ENCODE measurements at regions of chr2 and their contacts with region 1.

Region 1: GRCh38 chr2:11539317-11540152 is 5.7 kb downstream of the GREB1 start:
- DNase-seq: no peak
- ATAC-seq: peak; percentile 18 to 55 (median 40)
- H3K4me3 ChIP-seq: peak overlapping the region; percentile 34
- H3K27ac ChIP-seq: peak overlapping the region; percentile 53
- H3K4me1 ChIP-seq: peaks cover 30% of the 10 kb centered on the region
- H3K27me3 ChIP-seq: no peaks in the 10 kb centered on the region
- CTCF ChIP-seq: no peak

Region 2: DNA sequence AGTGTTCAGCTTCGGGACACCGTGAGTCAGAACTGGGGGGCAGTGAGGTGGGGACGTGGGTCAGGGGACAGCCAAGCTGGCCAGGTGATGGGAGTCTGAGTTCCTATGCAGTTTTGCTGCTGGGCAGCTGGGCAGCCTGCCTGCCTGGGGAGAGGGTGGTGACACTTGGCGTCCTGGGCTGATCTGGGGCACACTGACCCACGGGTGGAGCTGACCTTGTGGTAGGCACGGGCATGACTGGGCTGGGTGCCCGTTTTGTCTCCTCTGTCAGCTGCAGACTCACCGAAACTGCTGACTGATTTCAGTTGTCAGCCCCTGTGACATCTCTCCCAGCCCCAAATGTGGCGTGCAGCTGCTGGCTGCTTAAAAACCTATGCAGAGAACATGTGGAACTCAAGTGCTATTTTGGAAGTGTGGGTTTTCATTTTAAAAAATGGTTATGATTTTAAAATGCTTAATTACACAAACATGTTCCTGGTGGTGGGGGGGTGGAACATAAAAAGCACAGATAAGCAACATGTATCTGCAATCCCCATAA is 40.9 kb before region 1 on chr2:
- intact Hi-C with region 1: loop called in 1 of 2 experiments (anchors 5 kb)
- DNase-seq: peak; percentile 85 to 96
- ATAC-seq: peak; percentile 97 to 99 (median 98)
- H3K4me3 ChIP-seq: peak overlapping the region; percentile 8
- H3K27ac ChIP-seq: peak overlapping the region; percentile 79
- H3K4me1 ChIP-seq: peaks cover 22% of the 10 kb centered on the region
- H3K27me3 ChIP-seq: no peaks in the 10 kb centered on the region
- CTCF ChIP-seq: no peak

Region 3: DNA sequence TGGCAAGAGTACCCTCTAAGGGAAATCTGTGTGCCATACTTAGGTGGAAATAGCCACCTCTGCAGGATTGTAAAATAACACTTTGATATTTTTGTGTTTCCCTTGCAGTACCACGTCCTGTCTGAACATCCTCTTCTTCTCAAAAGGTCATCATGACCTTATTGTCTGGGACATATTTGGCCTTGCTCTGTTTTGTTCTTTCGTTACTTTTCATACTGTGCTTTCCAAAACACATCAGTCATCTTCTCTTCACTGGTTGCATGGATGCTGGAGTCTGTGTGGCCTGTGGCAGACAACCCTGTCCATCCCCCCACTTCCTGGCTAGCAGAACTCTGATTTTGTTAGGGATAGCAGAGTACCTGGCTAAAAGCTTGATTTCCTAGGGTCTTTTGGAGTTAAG is 15.1 kb before region 1 on chr2:
- intact Hi-C with region 1: loop called in 1 of 2 experiments (anchors 1 kb)
- DNase-seq: no peak
- ATAC-seq: peak in 2 of 4 donors; percentile 27 to 50
- H3K4me3 ChIP-seq: no peak overlapping the region
- H3K27ac ChIP-seq: no peak overlapping the region
- H3K4me1 ChIP-seq: peaks cover 3% of the 10 kb centered on the region
- H3K27me3 ChIP-seq: no peaks in the 10 kb centered on the region
- CTCF ChIP-seq: no peak

Region 4: GRCh38 chr2:11573418-11574175 is 34.1 kb after region 1 on chr2:
- intact Hi-C with region 1: loop called in 1 of 2 experiments (anchors 5 kb)
- DNase-seq: peak in 1 of 2 donors; percentile 16
- ATAC-seq: no peak
- H3K4me3 ChIP-seq: no peak overlapping the region
- H3K27ac ChIP-seq: peak overlapping the region; percentile 32
- H3K4me1 ChIP-seq: peaks cover 12% of the 10 kb centered on the region
- H3K27me3 ChIP-seq: no peaks in the 10 kb centered on the region
- CTCF ChIP-seq: no peak

Region 5: DNA sequence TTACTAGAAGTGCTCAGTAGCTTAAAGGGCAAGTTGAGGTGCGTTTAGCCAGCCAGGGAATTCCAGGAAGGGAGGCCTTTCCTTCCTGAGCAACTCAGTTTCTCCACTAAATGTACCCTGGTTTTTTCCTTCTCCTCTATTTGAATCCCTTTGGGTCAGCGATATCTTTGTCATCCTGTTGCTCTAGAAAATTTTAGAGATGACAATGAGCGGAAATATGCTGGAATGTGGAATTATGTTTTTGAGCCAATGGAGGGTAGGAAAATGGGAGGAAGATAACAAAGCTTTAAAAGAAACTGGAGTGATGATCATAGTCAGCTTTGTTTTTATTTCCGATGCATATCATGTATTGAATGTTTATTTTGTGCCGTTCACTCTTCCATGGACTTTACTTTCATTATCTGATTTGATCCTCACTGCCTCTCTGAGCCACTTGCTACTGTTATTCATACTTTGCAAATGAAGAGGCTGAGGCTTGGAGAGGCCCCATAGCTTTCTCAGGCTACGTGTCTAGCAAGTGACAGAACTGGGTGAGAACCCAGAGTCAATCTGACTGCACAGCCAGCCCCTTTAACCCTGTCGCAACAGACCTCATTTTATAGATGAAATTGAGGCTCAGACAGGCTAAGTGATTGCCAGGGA is 63.1 kb after region 1 on chr2:
- intact Hi-C with region 1: no loop called
- DNase-seq: no peak
- ATAC-seq: no peak
- H3K4me3 ChIP-seq: no peak overlapping the region
- H3K27ac ChIP-seq: no peak overlapping the region
- H3K4me1 ChIP-seq: peaks cover 12% of the 10 kb centered on the region
- H3K27me3 ChIP-seq: no peaks in the 10 kb centered on the region
- CTCF ChIP-seq: no peak

Measured in psoas muscle (tissue), 8 donors.